ENCODE measurements at regions of chr3 and their contacts with region 1.

Region 1: GRCh38 chr3:159763602-159764489 is 224.8 kb upstream of the IL12A start:
- DNase-seq: peak; percentile 33
- H3K4me3 Mint-ChIP-seq: peak overlapping the region; percentile 87
- H3K27ac Mint-ChIP-seq: peak overlapping the region; percentile 67
- H3K4me1 Mint-ChIP-seq: peaks cover 10% of the 10 kb centered on the region
- H3K27me3 Mint-ChIP-seq: peaks cover 66% of the 10 kb centered on the region

Region 2: GRCh38 chr3:159401069-159401468 is 362.8 kb before region 1 on chr3:
- intact Hi-C with region 1: no loop called
- DNase-seq: no peak
- H3K4me3 Mint-ChIP-seq: no peak overlapping the region
- H3K27ac Mint-ChIP-seq: no peak overlapping the region
- H3K4me1 Mint-ChIP-seq: no peaks in the 10 kb centered on the region
- H3K27me3 Mint-ChIP-seq: no peaks in the 10 kb centered on the region

Region 3: DNA sequence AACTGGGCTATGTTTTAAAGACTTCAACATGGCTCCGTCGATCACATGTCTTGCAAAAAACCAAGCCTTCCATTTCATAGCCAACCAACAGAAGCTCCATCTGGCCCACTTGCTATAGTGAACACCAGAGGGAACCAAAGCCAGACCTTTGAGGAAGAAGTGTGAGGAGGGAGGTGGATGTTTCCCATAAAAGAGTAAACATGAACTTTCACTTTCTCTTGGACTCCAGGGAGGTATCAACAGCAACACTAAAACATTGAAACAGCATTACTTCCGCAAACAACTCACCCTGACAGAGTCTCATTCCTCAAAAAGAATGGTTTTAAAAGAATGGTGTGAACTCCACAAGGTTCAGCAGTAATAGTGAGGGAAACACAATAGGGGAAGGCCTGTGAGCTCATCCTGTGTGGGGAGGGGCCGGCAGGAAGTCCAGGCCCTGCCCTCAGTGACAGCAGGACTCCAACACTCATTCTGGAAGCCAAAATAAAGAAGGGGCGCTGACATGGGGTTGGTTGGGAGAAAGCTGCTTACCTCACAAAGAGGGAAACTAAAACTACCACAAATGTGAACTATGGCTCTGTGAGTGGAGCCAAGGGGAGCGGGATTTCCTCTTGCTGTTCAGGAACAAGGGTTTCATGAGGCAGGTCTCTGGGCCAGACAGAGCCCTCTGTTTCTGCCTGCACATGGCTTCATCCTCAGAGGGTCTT is 165.7 kb after region 1 on chr3:
- intact Hi-C with region 1: no loop called
- DNase-seq: no peak
- H3K4me3 Mint-ChIP-seq: no peak overlapping the region
- H3K27ac Mint-ChIP-seq: no peak overlapping the region
- H3K4me1 Mint-ChIP-seq: peaks cover 10% of the 10 kb centered on the region
- H3K27me3 Mint-ChIP-seq: no peaks in the 10 kb centered on the region

Region 4: DNA sequence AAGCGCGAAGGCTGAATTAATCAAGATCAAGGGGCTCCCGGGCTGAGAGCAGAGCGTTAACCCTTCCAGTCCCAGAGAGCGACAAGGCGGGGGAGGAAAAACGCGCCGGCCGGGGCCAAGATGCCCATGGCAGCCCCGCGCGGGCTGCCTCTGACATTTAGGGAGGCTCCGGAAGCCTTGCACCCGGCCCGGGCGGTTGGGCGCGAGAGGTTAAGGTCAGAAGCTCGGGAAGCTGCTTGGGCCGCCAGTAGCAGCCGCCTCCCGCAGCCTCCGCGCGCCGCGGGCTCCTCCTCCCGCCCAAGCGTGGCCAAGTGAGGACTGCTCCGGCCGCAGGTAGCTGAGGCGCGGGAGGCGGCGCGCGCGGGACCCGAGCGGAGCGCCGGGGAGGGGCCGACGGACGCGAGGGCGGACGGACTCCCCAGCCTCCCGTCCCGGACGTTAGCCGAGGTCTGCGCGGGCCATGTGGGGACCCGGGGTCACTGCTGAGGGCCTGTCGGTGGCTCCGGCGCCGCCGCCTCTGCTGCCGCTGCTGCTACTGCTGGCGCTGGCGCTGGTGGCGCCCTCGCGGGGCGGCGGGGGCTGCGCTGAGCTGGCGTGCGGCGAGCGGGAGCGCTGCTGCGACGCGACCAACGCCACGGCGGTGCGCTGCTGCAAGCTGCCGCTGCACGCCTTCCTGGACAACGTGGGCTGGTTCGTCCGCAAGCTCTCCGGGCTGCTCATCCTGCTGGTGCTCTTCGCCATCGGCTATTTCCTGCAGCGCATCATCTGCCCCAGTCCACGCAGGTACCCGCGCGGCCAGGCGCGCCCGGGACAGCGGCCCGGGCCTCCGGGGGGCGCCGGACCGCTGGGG is 461.6 kb after region 1 on chr3 and contains the start of gene C3orf80:
- intact Hi-C with region 1: loop called (anchors 5 kb)
- DNase-seq: peak; percentile 37
- H3K4me3 Mint-ChIP-seq: peak within 1 kb of the TSS; percentile 77
- H3K27ac Mint-ChIP-seq: peak within 1 kb of the TSS; percentile 40
- H3K4me1 Mint-ChIP-seq: peaks cover 14% of the 10 kb centered on the region
- H3K27me3 Mint-ChIP-seq: peaks cover 66% of the 10 kb centered on the region
- total RNA-seq, gene C3orf80: 0.18 and 0.42 TPM in 2 replicates